HEK293 (cell line): ENCODE measurements at regions of chr2 and their contacts with region 1.

Region 1: GRCh38 chr2:22375096-22375495 is 1009.9 kb upstream of the KLHL29 start:
- H3K4me3 ChIP-seq: no peak overlapping the region
- H3K27ac ChIP-seq: no peak overlapping the region
- H3K4me1 ChIP-seq: no peaks in the 10 kb centered on the region
- CTCF ChIP-seq: no peak

Region 2: DNA sequence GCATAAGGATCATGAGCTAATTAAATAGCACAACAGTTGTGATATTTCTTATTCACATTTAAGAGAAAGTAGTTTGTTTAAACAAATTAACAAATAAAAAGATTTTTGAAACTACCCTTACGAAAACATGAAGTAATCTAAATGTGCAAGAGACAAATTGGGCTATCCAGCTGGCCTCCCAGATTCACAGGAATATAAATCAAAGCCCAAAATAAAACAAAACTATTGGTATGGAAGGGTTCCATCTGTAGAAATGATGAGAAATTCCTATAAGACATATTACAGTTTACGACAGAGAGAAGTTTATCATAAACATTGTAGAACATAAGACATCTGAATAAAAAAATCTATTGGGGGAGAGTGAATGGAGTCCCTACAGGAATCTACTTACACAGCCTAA is 126.2 kb before region 1 on chr2:
- CTCF ChIA-PET with region 1: no interaction called
- POLR2A ChIA-PET with region 1: no interaction called
- H3K4me3 ChIP-seq: no peak overlapping the region
- H3K27ac ChIP-seq: no peak overlapping the region
- H3K4me1 ChIP-seq: no peaks in the 10 kb centered on the region
- CTCF ChIP-seq: no peak

Region 3: GRCh38 chr2:22355816-22356433 is 19.2 kb before region 1 on chr2:
- CTCF ChIA-PET with region 1: interaction called, 18 read pairs
- POLR2A ChIA-PET with region 1: no interaction called
- H3K4me3 ChIP-seq: no peak overlapping the region
- H3K27ac ChIP-seq: no peak overlapping the region
- H3K4me1 ChIP-seq: no peaks in the 10 kb centered on the region
- CTCF ChIP-seq: peak; percentile 13; the same call in 1 of the 2 replicates